Heart left ventricle (tissue), 16 donors: ENCODE measurements at regions of chr3 and their contacts with region 1.

Region 1: DNA sequence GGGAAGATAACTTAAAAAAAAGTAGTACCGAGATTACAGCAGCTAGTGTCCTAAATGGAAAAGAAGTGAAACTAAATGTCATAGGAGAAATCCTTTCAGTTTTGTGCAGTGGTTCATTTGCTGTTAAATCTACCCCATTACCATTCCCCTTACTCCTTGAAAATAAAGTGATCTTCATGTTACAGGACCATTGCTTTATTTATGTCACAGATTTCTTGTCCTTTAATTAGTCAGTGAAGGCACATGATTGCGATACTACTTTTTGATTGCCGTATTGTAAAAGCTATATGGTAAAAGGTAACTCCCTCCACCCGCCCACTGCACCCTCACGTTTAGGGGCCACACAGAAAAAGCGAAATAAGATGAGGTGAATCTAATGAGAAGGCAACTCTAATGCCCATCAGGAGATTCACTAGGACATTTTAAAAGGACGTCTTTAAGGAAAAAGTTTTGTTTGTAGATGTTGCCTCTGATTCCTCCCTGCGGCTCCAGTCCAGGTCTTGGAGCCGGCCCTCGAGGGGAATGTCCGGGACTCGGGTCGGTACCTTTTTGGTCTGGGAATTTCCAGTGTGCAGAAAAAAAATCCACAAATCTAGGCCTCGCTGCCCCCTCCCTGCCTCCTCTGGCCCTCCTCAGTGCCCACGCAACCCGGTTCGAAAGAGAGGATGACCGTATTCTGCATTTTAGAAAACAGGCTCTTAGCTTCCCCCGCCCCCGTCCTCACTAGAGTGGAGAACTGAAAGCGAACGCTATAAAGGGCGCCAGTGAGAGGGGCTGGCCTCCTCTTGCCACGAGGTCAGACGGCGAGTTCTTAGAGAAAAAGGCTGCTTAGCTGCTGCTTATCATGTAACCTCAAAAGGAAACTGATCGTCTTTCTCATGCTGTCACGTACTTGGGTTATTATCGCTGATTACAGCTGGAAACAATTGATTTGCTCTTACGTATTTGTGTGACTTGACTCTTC is 21.8 kb upstream of the NFKBIZ start:
- DNase-seq: peak; percentile 77 to 82 (median 79)
- ATAC-seq: peak; percentile 80 to 90 (median 87)
- H3K4me3 ChIP-seq: peak overlapping the region; percentile 37 to 71 (median 60)
- H3K27ac ChIP-seq: peak overlapping the region; percentile 34 to 91 (median 85)
- H3K4me1 ChIP-seq: peaks cover 0 to 37% (median 32%) of the 10 kb centered on the region in 12 donors
- H3K27me3 ChIP-seq: no peaks in the 10 kb centered on the region
- CTCF ChIP-seq: peak in 1 of 12 donors; percentile 8
- POLR2A ChIP-seq: peak in 1 of 2 donors; percentile 16

Region 2: DNA sequence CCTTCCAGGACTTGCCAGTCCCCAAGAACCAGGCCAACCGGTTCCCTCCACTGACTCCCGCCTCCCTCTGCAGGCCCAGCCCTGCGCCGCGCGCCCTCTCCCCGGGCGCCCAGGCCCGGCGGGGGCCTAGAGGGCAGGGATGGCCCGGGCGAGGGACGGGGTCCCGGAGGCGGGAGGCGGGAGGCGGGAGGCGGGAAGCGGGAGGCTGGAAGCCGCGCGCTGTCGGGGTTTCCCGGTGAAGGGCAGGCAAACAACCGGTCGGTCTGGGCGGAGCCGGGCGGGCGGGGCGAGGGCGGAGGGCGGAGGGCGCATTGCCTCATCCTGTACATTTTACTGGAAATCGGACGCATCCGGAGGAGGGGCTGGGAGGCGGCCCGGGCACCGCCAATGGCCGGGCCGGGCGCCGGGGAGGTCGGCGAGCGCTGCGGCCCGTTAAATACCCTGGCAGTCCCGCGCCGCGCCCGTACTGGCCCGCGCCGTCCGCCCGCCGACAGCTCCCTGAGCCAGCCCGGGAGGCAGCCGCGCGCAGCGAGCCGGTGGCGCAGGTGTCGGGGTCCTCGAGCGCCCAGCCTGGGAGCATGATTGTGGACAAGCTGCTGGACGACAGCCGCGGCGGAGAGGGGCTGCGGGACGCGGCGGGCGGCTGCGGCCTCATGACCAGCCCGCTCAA is 21.7 kb after region 1 on chr3 and contains the start of gene NFKBIZ:
- intact Hi-C with region 1: loop called in 4 of 10 experiments (anchors 1 to 2 kb)
- DNase-seq: peak; percentile 97 to 98 (median 98)
- ATAC-seq: peak; percentile 96 to 99 (median 98)
- H3K4me3 ChIP-seq: peak within 1 kb of the TSS; percentile 77 to 99 (median 89)
- H3K27ac ChIP-seq: peak within 1 kb of the TSS; percentile 96 to 100 (median 99)
- H3K4me1 ChIP-seq: peaks cover 0 to 49% (median 13%) of the 10 kb centered on the region in 12 donors
- H3K27me3 ChIP-seq: no peaks in the 10 kb centered on the region
- CTCF ChIP-seq: no peak
- POLR2A ChIP-seq: peak; percentile 25 to 98
- total RNA-seq, gene NFKBIZ: 6.9 to 44.8 (median 10.0) TPM

Region 3: GRCh38 chr3:101940521-101941317 is 113.2 kb after region 1 on chr3:
- intact Hi-C with region 1: loop called in 1 of 10 experiments (anchors 10 kb)
- DNase-seq: peak; percentile 47 to 78 (median 72)
- ATAC-seq: peak; percentile 85 to 97 (median 94)
- H3K4me3 ChIP-seq: peak overlapping the region in 6 of 12 donors; percentile 1 to 22 (median 8)
- H3K27ac ChIP-seq: peak overlapping the region in 8 of 12 donors; percentile 17 to 82 (median 47)
- H3K4me1 ChIP-seq: peaks cover 0 to 73% (median 27%) of the 10 kb centered on the region in 12 donors
- H3K27me3 ChIP-seq: no peaks in the 10 kb centered on the region
- CTCF ChIP-seq: no peak
- POLR2A ChIP-seq: no peak

Region 4: GRCh38 chr3:102733791-102734574 is 906.5 kb after region 1 on chr3:
- intact Hi-C with region 1: loop called in 1 of 10 experiments (anchors 10 kb)
- DNase-seq: no peak
- ATAC-seq: no peak
- H3K4me3 ChIP-seq: no peak overlapping the region
- H3K27ac ChIP-seq: no peak overlapping the region
- H3K4me1 ChIP-seq: peaks cover 0 to 8% (median 0%) of the 10 kb centered on the region in 12 donors
- H3K27me3 ChIP-seq: no peaks in the 10 kb centered on the region
- CTCF ChIP-seq: no peak
- POLR2A ChIP-seq: no peak